Heart right ventricle (tissue), 16 donors: ENCODE measurements at regions of chr9 and their contacts with region 1.

Region 1: GRCh38 chr9:26995815-26996214 is 9.7 kb downstream of the LRRC19 start:
- DNase-seq: no peak
- ATAC-seq: no peak
- H3K4me3 ChIP-seq: no peak overlapping the region
- H3K27ac ChIP-seq: no peak overlapping the region
- H3K4me1 ChIP-seq: no peaks in the 10 kb centered on the region
- H3K27me3 ChIP-seq: no peaks in the 10 kb centered on the region
- CTCF ChIP-seq: no peak

Region 2: GRCh38 chr9:26856413-26857032 is 139.3 kb before region 1 on chr9:
- intact Hi-C with region 1: no loop called
- DNase-seq: no peak
- ATAC-seq: no peak
- H3K4me3 ChIP-seq: no peak overlapping the region
- H3K27ac ChIP-seq: no peak overlapping the region
- H3K4me1 ChIP-seq: no peaks in the 10 kb centered on the region
- H3K27me3 ChIP-seq: no peaks in the 10 kb centered on the region
- CTCF ChIP-seq: peak in 7 of 9 donors; percentile 9 to 47 (median 23)

Region 3: GRCh38 chr9:27053369-27054022 is 57.7 kb after region 1 on chr9:
- intact Hi-C with region 1: loop called in 1 of 10 experiments (anchors 10 kb)
- DNase-seq: no peak
- ATAC-seq: peak in 3 of 8 donors; percentile 46 to 65 (median 59)
- H3K4me3 ChIP-seq: no peak overlapping the region
- H3K27ac ChIP-seq: peak overlapping the region in 1 of 10 donors; percentile 22
- H3K4me1 ChIP-seq: peaks cover 0 to 14% (median 8%) of the 10 kb centered on the region in 9 donors
- H3K27me3 ChIP-seq: no peaks in the 10 kb centered on the region
- CTCF ChIP-seq: no peak